ENCODE measurements at regions of chr5 and their contacts with region 1.

Region 1: DNA sequence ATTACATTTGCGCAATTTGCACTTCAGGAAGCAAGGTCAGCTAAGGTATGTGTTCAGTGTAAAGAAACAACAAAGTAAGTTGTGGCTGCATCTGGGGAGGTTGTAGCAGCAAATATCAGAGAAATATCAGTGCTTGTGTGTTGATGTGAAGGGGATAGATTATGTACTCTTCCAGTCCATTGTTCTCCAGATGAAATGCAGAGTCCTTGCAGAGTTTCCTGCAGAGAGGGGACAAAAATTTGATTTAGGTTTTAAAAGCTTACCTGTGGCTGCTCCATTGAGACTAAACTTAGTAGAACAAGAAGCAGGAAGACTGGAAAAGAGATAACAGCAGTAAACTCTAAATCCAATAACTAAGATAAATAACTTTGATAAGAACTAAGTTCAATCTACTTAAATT is 952.2 kb downstream of the CDH18 start:
- DNase-seq: no peak
- H3K4me3 Mint-ChIP-seq: no peak overlapping the region
- H3K27ac Mint-ChIP-seq: no peak overlapping the region
- H3K4me1 Mint-ChIP-seq: peaks cover under 1% of the 10 kb centered on the region
- H3K27me3 Mint-ChIP-seq: no peaks in the 10 kb centered on the region
- CTCF ChIP-seq: no peak

Region 2: DNA sequence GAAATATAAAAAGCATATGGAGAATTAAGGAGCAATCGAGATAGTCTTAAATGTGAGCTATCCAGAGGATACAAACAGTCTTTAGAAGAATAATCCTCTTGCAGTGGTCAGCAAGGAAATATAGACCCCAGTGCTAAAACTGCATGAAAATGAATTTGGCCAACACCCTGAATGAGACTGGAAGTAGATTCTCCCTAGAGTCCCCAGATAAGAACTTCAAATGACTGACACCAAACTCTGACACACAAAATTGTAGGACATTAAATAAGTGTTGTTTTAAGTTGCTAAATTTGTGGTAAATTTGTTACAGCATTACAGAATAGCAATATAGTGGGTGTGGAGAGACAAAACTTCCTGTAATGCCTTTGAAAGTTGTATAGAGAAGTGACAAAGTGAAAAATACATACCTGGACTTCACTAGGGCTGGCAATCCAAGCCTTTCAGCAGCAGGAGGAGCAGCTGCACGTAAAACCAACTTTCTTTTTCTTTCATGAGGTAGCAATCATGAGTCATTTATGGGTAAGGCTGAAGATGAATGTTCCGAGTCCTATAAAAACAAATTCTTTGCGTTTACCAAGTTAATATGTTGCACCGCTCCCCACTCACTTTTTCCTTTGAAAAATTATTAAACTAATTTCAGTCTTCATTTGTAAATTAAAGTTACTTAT is 263.5 kb before region 1 on chr5:
- CTCF ChIA-PET with region 1: no interaction called
- intact Hi-C with region 1: loop called (anchors 5 kb)
- DNase-seq: peak; percentile 43
- H3K4me3 Mint-ChIP-seq: no peak overlapping the region
- H3K27ac Mint-ChIP-seq: peak overlapping the region; percentile 69
- H3K4me1 Mint-ChIP-seq: no peaks in the 10 kb centered on the region
- H3K27me3 Mint-ChIP-seq: no peaks in the 10 kb centered on the region
- CTCF ChIP-seq: no peak

Measured in Calu3 (cell line).